ENCODE measurements at regions of chr1 and their contacts with region 1.

Region 1: DNA sequence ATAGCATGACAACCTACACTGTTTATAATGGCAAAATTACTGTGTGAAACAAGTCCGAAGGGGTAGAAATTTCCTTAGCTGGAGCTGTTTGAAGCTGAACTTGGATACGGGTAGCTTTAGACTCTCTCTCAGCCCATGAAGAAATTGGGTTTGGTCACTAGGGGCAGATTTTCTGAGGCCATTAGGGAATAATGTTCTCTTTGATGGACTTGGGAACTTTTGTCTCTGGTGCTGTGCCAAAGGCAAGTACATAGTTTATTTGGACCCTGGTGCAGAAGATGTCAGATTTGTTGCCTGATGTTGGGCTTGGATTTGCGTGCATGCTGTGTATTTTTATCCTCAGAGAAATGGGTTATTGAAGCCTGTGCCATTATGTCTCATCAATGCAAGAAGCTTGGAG is 109.6 kb downstream of the VPS13D start:
- DNase-seq: no peak
- H3K4me3 ChIP-seq: no peak overlapping the region
- H3K27ac ChIP-seq: no peak overlapping the region
- H3K4me1 ChIP-seq: no peaks in the 10 kb centered on the region
- H3K27me3 ChIP-seq: no peaks in the 10 kb centered on the region
- CTCF ChIP-seq: no peak

Region 2: GRCh38 chr1:11977625-11978024 is 361.8 kb before region 1 on chr1:
- CTCF ChIA-PET with region 1: no interaction called
- dilution Hi-C with region 1: no loop called
- in situ Hi-C with region 1: no loop called
- intact Hi-C with region 1: no loop called
- DNase-seq: no peak
- H3K4me3 ChIP-seq: no peak overlapping the region
- H3K27ac ChIP-seq: no peak overlapping the region
- H3K4me1 ChIP-seq: peaks cover 27% of the 10 kb centered on the region
- H3K27me3 ChIP-seq: no peaks in the 10 kb centered on the region
- CTCF ChIP-seq: no peak

Region 3: DNA sequence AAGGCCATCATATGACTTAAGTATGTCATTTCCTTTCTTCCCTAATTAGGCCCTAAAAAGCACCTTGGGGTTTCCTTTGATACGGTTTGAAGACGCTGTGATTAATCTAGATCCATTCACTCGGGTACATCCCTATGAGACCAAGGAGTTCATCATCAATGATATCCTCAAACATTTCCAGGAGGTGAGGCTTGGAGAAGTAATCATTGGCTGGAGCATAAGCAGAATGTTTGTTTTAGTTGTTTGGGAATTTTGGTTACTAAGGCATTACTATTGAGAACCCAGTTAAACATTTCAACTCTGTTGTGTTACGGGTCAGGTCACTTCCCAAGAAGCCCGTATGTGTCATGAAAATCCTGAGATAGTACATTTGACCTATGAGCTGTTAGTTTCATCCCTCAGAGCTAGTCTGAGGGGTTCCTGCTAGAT is 75.7 kb after region 1 on chr1:
- CTCF ChIA-PET with region 1: no interaction called
- dilution Hi-C with region 1: loop called (anchors 5 kb)
- in situ Hi-C with region 1: no loop called
- intact Hi-C with region 1: no loop called
- DNase-seq: no peak
- H3K4me3 ChIP-seq: no peak overlapping the region
- H3K27ac ChIP-seq: no peak overlapping the region
- H3K4me1 ChIP-seq: no peaks in the 10 kb centered on the region
- H3K27me3 ChIP-seq: no peaks in the 10 kb centered on the region
- CTCF ChIP-seq: no peak